Activated T-helper 1 cell treated with anti-CD3 and anti-CD28 coated beads, Interleukin-12 subunit alpha, Interleukin-12 subunit beta, Interleukin-2, Interleukin-4 antibody, amounts not matched to agents 30 ng/mL and 10 ng/mL and 1 ng/mL, durations not matched to agents 14 hours and 24 hours and 36 hours (primary cell): ENCODE measurements at regions of chr11 and their contacts with region 1.

Region 1: DNA sequence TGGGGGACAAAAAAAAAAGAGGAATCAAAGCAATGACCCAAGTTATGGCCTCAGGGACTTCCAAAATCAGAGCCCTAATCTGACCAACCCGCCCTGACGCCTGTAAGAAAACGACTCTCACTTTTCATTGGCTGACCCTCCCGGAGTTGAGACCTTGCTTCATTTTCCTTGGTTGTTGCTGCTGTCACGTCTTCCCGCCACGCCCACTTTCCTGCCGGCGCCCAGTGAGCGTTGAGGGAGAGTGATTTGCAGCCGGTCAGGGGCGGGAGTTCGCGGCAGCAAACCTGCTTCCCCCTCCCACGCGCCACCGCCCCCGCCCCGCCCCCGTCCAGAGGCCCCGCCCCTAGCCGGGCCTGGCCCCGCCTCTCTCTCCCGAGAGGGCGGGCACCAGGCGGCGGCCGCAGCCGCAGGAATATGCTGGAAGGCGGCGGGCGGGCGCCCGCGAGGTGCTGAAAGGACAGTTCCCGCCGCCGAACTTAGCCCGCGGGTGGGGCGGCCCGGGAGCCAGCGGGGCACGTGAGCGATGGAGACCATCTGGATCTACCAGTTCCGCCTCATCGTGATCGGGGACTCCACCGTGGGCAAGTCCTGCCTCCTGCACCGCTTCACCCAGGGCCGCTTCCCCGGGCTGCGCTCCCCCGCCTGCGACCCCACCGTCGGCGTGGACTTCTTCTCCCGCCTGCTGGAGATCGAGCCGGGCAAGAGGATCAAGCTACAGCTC is at the start of gene RAB39A:
- DNase-seq: peak; percentile 71
- H3K4me3 Mint-ChIP-seq: peak within 1 kb of the TSS; percentile 71
- H3K27ac Mint-ChIP-seq: no peak within 1 kb of the TSS
- H3K4me1 Mint-ChIP-seq: peaks cover 6% of the 10 kb centered on the region
- H3K27me3 Mint-ChIP-seq: peaks cover 25% of the 10 kb centered on the region
- total RNA-seq, gene RAB39A: not detected in 2 replicates

Region 2: DNA sequence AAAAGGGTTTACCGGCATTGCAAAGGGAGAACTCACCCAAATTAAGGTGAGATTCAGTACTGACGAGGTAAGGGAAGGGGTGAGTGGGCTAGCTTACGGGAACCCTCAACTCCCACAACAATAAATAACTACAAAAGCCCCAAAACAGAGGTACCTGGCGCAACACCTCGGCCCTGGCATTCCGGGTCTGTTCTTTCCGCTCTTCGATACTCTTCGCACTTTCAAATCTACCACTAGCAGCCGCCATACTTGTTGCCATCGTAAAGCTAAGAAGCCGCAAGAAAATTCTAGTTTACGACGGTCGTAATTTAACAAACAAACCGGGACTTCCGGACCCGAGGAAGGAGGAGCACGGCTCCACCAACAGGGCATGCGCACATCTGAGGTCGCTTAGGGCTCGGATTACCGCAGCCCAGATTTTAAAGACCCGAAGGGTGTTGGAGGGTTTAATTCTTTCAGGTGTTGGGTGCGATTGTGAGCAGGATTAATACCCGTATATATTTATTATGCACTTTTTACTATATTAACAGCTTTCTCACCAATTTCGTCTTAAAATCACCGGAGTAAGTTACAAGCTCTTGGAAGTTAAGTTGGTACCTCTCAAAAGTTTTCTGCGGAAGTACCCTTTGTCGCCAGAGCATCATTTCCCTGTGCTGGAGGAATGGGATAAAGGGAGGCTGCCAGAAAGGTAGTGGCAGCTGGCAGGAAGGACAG is 470.5 kb before region 1 on chr11 and contains the start of gene CWF19L2:
- intact Hi-C with region 1: loop called (anchors 5 kb)
- DNase-seq: peak; percentile 88
- H3K4me3 Mint-ChIP-seq: peak within 1 kb of the TSS; percentile 91
- H3K27ac Mint-ChIP-seq: peak within 1 kb of the TSS; percentile 87
- H3K4me1 Mint-ChIP-seq: peaks cover 28% of the 10 kb centered on the region
- H3K27me3 Mint-ChIP-seq: peaks cover 9% of the 10 kb centered on the region
- total RNA-seq, gene CWF19L2: 16.5 and 16.7 TPM in 2 replicates

Region 3: DNA sequence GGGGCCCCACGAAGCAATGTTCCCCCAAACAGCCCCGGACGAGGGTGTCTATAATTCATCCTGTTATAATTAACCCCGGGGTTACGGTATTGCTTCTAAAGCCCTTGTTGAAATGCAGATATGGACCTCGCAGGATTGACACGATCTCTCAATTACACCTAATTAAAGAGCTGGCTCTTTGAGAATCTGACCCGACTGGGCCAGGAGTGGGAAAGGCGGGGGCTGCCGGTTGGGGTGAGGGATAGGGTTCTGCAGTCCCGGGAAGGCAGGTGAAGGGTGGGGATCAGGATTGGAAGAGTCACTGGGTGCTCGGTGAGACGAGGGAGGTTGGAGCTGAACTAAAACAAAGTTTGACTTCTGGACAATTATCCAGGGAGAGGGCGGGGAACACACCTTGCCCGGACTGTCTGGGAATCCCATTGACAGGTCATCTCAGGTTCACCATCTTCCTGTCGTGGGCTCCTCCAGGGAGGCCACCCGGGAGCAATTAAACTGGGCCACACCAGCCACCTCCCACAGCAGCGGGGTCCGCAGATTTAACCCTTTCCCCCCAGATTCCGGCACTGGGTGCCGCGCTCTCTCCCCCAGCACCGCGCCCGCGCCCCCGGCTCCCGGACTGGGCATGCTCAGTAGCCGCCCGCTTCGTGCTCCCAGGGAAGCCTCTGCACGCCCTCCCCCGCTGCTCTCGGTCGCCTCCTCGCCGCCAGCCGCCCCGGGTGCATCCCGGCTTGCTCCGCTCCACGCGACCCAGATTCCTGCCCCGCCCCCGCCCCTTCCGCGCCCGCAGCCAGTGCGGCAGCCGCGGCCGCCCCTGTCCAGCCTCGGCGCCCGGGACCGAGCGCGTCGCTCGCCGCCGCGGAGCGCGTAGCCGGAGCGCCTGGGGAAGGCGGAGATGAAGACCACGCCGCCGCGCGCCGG is 337.5 kb before region 1 on chr11 and contains the start of gene ELMOD1:
- intact Hi-C with region 1: loop called (anchors 5 kb)
- DNase-seq: peak; percentile 2
- H3K4me3 Mint-ChIP-seq: peak within 1 kb of the TSS; percentile 85
- H3K27ac Mint-ChIP-seq: peak within 1 kb of the TSS; percentile 56
- H3K4me1 Mint-ChIP-seq: peaks cover 26% of the 10 kb centered on the region
- H3K27me3 Mint-ChIP-seq: peaks cover 84% of the 10 kb centered on the region
- total RNA-seq, gene ELMOD1: not detected in 2 replicates